ENCODE measurements at regions of chrX and their contacts with region 1.

Region 1: GRCh38 chrX:107672955-107673378 is 44.7 kb downstream of the PRPS1 start:
- DNase-seq: peak; percentile 82

Region 2: GRCh38 chrX:107610667-107611066 is 62.3 kb before region 1 on chrX:
- CTCF ChIA-PET with region 1: interaction called, 10 read pairs
- POLR2A ChIA-PET with region 1: no interaction called
- DNase-seq: no peak

Region 3: GRCh38 chrX:107662145-107662544 is 10.8 kb before region 1 on chrX:
- CTCF ChIA-PET with region 1: interaction called, 13 read pairs
- POLR2A ChIA-PET with region 1: interaction called, 6 read pairs
- DNase-seq: no peak

Region 4: DNA sequence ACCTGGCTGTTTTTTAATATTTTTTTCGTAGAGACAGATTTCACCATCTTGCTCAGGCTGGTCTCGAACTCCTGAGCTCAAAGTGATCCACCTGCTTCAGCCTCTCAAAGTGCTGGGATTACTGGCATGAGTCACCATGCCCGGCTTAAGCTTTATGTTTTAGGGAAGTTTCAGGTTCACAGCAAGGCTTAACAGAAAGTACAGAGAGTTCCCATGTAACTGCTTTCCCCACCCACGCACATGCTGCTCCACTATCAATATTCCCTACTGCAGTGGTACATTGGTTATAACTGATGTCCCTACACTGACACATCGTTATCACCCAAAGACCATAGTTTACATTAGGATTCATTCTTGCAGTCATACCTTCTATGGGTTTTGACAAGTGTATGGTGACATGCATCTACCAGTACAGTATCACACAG is 18.1 kb after region 1 on chrX:
- CTCF ChIA-PET with region 1: interaction called, 7 read pairs
- POLR2A ChIA-PET with region 1: interaction called, 43 read pairs
- DNase-seq: no peak

Region 5: GRCh38 chrX:107716816-107717700 is 44.1 kb after region 1 on chrX:
- CTCF ChIA-PET with region 1: interaction called, 83 read pairs
- POLR2A ChIA-PET with region 1: interaction called, 724 read pairs
- DNase-seq: peak; percentile 67

Region 6: GRCh38 chrX:107731831-107732502 is 59.0 kb after region 1 on chrX:
- CTCF ChIA-PET with region 1: interaction called, 13 read pairs
- POLR2A ChIA-PET with region 1: interaction called, 724 read pairs
- DNase-seq: peak; percentile 61

Region 7: DNA sequence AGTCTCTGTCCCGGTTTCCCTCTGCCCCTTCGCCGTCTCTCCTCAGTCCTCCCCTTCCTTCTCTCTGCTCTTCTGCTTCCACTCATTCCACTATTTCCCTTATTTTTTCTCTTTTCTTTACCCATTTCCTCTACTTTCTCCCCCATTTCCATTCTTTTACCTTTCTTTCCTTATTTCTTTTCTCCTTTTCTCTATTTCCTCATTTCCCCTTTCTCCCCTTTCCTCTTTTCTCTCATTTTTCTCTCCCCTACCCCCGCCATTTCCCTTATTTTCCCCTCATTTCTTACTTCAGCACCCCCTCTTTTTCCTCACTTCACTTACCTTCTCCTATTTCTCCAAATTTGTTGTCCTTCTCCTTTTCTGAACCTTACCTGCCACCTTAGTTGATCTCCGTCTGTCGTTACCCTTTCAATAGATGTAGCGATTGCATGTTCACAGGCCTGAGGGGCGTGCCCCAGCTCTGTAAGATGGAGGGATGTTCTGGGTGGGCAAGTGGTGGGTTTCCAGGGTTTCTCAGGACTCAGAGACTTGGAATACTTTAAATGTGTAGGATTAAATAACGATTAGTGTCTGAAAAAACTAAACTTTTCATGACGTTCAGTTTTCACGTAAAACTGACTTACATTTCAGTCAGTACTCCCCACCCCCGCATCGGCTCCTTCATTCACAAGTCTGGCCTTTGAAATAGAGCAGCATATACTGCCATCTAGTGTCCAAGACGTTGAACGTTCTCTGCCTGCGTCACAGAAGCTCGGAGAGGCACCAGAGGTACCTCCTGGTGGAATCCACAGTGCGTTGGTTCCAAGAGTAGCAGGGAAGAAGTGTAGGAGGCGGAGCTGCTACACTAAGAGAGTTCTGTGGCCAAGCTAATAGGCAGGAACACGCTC is 103.9 kb after region 1 on chrX:
- CTCF ChIA-PET with region 1: interaction called, 86 read pairs
- POLR2A ChIA-PET with region 1: interaction called, 42 read pairs
- DNase-seq: peak; percentile 89

Region 8: GRCh38 chrX:107787827-107788226 is 114.9 kb after region 1 on chrX:
- CTCF ChIA-PET with region 1: no interaction called
- POLR2A ChIA-PET with region 1: no interaction called
- DNase-seq: no peak

Measured in HEK293T (cell line).